ENCODE measurements at regions of chr19 and their contacts with region 1.

Region 1: GRCh38 chr19:51367565-51368365 is 1.0 kb downstream of the CLDND2 start:
- H3K4me3 ChIP-seq: peak overlapping the region; percentile 78
- H3K27ac ChIP-seq: peak overlapping the region; percentile 85; the same call in 1 of the 2 replicates
- H3K4me1 ChIP-seq: peaks cover 7% of the 10 kb centered on the region
- CTCF ChIP-seq: peak; percentile 45; the same call in 1 of the 2 replicates

Region 2: GRCh38 chr19:51393959-51394836 is 26.4 kb after region 1 on chr19:
- CTCF ChIA-PET with region 1: interaction called, 5 read pairs
- POLR2A ChIA-PET with region 1: interaction called, 20 read pairs
- H3K4me3 ChIP-seq: peak overlapping the region; percentile 76
- H3K27ac ChIP-seq: peak overlapping the region; percentile 35
- H3K4me1 ChIP-seq: peaks cover 4% of the 10 kb centered on the region; the same call in 1 of the 2 replicates
- CTCF ChIP-seq: no peak; the same call in 1 of the 2 replicates

Region 3: DNA sequence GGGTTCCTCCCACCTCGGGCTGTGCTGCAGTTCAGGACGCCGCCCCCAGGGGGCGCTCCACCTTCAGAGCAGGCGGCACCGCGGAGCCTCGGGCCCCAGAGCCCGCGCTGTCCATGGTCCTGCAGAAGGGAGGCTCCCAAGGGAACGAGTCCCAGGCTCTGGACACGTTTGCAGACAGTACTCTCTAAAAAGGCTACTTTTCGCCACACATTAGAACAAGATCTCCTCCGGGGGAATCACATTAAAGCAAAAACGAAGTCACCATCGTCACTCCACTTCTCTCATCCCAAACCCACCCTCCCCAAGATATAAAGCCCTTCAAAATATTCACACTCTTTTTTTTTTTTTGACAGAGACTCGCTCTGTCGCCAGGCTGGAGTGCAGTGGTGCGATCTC is 54.3 kb after region 1 on chr19:
- CTCF ChIA-PET with region 1: no interaction called
- POLR2A ChIA-PET with region 1: no interaction called
- H3K4me3 ChIP-seq: no peak overlapping the region
- H3K27ac ChIP-seq: no peak overlapping the region
- H3K4me1 ChIP-seq: no peaks in the 10 kb centered on the region
- CTCF ChIP-seq: peak; percentile 86